H1 (cell line): ENCODE measurements at regions of chr9 and their contacts with region 1.

Region 1: GRCh38 chr9:34899535-34900158 is 58.4 kb upstream of the PHF24 start:
- DNase-seq: peak; percentile 31 to 86
- H3K4me3 ChIP-seq: no peak overlapping the region
- H3K27ac ChIP-seq: no peak overlapping the region
- H3K4me1 ChIP-seq: no peaks in the 10 kb centered on the region
- H3K27me3 ChIP-seq: peaks cover 0 to 3% (median 0%) of the 10 kb centered on the region in 4 experiments; a peak in 1 of 7 replicates
- CTCF ChIP-seq: peak; percentile 84 to 93 (median 91)
- EP300 ChIP-seq: no peak
- POLR2A ChIP-seq: no peak
- RAD21 ChIP-seq: peak; percentile 98 to 99

Region 2: GRCh38 chr9:34869390-34869789 is 30.3 kb before region 1 on chr9:
- CTCF ChIA-PET with region 1: interaction called, 10 read pairs
- POLR2A ChIA-PET with region 1: no interaction called
- DNase-seq: no peak
- H3K4me3 ChIP-seq: no peak overlapping the region
- H3K27ac ChIP-seq: no peak overlapping the region
- H3K4me1 ChIP-seq: no peaks in the 10 kb centered on the region
- H3K27me3 ChIP-seq: no peaks in the 10 kb centered on the region
- CTCF ChIP-seq: peak in 2 of 3 experiments; percentile 40 to 47; a peak in 2 of 4 replicates
- EP300 ChIP-seq: no peak
- POLR2A ChIP-seq: no peak
- RAD21 ChIP-seq: peak; percentile 62 to 68

Region 3: DNA sequence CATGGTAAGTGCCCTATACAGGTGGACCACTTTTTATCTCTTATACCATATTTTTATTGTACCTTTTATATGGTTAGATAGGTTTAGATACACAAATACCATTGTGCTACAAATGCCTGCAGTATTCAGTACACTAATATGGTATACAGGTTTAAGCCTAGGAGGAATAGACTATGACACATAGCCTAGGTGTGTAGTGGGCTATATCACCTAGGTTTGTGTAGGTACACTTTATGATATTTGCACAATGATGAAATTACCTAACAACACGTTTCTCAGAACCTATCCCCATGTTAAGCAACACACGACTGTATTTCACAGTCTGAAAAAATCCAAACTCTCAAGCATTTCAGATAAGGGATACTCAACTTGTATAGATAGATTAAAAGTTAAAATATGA is 48.8 kb after region 1 on chr9:
- CTCF ChIA-PET with region 1: interaction called, 10 read pairs
- POLR2A ChIA-PET with region 1: no interaction called
- DNase-seq: no peak
- H3K4me3 ChIP-seq: no peak overlapping the region
- H3K27ac ChIP-seq: no peak overlapping the region
- H3K4me1 ChIP-seq: no peaks in the 10 kb centered on the region
- H3K27me3 ChIP-seq: no peaks in the 10 kb centered on the region; a peak in 1 of 7 replicates
- CTCF ChIP-seq: no peak
- EP300 ChIP-seq: no peak
- POLR2A ChIP-seq: no peak
- RAD21 ChIP-seq: no peak

Region 4: GRCh38 chr9:34974664-34975063 is 75.0 kb after region 1 on chr9:
- CTCF ChIA-PET with region 1: interaction called, 108 read pairs
- POLR2A ChIA-PET with region 1: no interaction called
- DNase-seq: no peak
- H3K4me3 ChIP-seq: no peak overlapping the region
- H3K27ac ChIP-seq: no peak overlapping the region
- H3K4me1 ChIP-seq: peaks cover 0 to 5% (median 3%) of the 10 kb centered on the region in 4 experiments; a peak in 5 of 7 replicates
- H3K27me3 ChIP-seq: no peaks in the 10 kb centered on the region
- CTCF ChIP-seq: no peak
- EP300 ChIP-seq: no peak
- POLR2A ChIP-seq: no peak
- RAD21 ChIP-seq: no peak

Region 5: GRCh38 chr9:35051069-35051967 is 151.7 kb after region 1 on chr9:
- CTCF ChIA-PET with region 1: interaction called, 54 read pairs
- POLR2A ChIA-PET with region 1: interaction called, 8 read pairs
- DNase-seq: peak in 1 of 2 experiments; percentile 84
- H3K4me3 ChIP-seq: no peak overlapping the region
- H3K27ac ChIP-seq: no peak overlapping the region
- H3K4me1 ChIP-seq: no peaks in the 10 kb centered on the region
- H3K27me3 ChIP-seq: no peaks in the 10 kb centered on the region
- CTCF ChIP-seq: peak in 2 of 3 experiments; percentile 63 to 78; a peak in 3 of 4 replicates
- EP300 ChIP-seq: no peak
- POLR2A ChIP-seq: no peak
- RAD21 ChIP-seq: peak; percentile 58 to 64